Left cardiac atrium (tissue), 4 donors: ENCODE measurements at regions of chr13 and their contacts with region 1.

Region 1: DNA sequence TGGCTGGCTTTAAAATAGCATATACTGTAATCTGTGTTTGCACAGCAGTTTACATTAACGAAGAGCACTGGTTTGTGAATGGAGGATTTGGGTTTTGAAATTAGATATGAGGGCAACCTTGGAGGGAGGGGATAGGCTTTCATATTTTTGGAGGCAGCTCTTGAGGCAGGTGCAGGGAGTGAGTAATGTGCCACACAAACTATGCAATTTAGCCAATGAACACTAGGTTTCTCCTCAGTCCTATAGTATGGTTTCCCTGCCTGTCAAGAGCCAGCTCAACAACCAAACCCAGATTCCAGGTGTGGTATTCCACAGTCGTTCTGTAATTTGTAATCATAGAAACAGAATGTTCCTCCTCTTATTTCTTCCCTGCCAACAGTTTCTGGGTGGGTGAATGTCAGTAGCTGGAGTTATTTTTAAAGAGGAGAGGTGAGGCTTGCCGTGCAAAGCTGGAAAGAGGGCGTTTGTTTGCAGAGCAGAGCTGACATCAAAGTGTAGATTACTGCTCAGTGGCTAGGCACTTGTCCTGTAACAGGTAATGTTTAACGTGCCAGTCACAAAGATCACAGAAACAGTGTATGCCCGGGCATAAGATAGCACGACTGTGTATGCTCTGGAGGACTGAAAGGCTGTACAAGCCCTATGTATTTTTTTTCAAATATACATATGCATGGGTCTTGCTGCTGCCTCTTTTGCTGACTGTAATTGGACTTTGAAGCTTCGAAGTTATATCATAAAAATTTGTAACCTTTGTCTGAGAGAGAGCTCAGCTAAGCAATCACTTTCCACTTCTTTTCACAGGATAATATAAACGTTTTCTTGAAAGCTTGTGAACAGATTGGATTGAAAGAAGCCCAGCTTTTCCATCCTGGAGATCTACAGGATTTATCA is 124.2 kb downstream of the LMO7 start:
- DNase-seq: no peak
- ATAC-seq: peak; percentile 62 to 80

Region 2: DNA sequence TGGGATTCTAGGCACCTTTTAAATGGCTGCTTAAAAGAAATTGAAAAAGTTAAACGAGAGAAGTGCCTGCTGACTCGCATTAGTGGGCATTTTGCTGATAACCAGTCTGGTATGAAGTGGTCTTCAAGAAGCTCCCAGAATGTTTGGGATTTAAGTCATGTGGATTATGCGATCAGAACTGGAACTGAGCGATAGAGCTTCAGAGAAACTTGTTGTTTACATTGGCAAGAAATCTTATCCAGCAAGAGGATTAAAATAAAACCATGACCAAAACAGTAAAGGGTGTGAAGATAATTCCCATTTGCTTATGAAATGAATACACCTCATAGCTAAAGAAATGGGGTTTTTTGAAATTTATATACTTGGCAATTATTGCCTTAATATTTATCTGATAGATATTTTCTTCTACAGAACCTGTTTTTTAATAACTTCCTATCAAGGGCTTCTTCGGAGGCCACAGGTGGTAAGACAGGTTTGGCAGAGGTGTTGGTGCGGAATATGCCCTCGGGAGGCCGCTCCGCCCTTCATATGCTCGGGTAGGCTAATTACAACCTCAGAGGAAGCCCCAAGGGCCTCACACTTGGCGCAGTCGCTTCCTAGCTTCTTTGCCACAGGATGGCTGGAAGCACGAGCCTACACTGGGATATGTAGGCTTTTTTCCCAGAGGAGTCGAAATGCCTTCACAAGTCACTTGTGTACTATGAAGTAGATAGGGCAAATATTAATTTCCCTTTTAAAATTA is 55.6 kb before region 1 on chr13:
- intact Hi-C with region 1: loop called in 1 of 2 experiments (anchors 5 kb)
- DNase-seq: no peak
- ATAC-seq: peak; percentile 12 to 71

Region 3: GRCh38 chr13:75803164-75803611 is 42.8 kb after region 1 on chr13:
- intact Hi-C with region 1: loop called in 1 of 2 experiments (anchors 5 kb)
- DNase-seq: no peak
- ATAC-seq: peak in 1 of 2 donors; percentile 9

Region 4: DNA sequence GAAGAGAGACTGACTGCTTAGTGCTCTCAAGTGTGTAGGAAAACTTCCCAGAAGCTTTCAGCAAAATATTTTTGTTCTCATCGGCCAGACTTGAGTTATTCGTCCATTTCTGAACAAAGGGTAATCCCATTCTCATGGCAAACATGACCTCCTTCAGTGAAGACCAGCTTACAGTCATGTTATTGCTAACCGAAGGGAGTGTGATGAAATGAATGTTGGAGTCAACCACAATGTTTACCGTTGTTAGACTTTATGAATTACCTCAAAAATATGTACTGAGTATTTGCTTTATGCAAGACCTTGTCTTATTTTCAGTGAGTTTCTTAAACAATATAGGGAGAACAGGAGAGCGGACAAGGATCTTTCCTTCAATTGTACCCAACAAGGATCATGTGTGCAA is 104.3 kb after region 1 on chr13:
- intact Hi-C with region 1: no loop called
- DNase-seq: no peak
- ATAC-seq: no peak

Region 5: GRCh38 chr13:75876360-75877050 is 116.1 kb after region 1 on chr13:
- intact Hi-C with region 1: no loop called
- DNase-seq: peak; percentile 50
- ATAC-seq: peak; percentile 90 to 93

Region 6: DNA sequence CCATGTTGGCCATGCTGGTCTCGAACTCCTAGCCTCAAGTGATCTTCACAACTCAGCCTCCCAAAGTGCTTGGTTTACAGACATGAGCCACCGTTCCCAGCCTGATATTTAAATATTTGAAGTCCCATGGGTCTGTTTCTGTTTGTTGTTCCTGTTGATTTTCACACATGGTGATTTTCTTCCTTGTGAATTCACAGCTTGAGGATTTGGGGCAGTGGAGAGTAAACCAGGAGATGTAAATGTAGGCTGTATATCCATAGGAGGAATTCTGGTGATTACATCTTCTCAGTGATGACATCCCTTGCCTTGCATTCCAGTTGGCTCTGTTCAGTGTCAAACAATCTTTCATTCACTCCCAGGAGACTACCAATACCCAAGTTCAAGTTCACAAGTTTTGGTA is 653.9 kb after region 1 on chr13:
- intact Hi-C with region 1: no loop called
- DNase-seq: no peak
- ATAC-seq: no peak